Activated naive CD4-positive, alpha-beta T cell treated with anti-CD3 and anti-CD28 coated beads for 36 hours (primary cell): ENCODE measurements at regions of chr13 and their contacts with region 1.

Region 1: GRCh38 chr13:46126552-46127357 is 21.9 kb upstream of the CPB2 start:
- DNase-seq: peak; percentile 91
- H3K4me3 Mint-ChIP-seq: no peak overlapping the region
- H3K27ac Mint-ChIP-seq: peak overlapping the region; percentile 76
- H3K4me1 Mint-ChIP-seq: peaks cover 38% of the 10 kb centered on the region
- H3K27me3 Mint-ChIP-seq: no peaks in the 10 kb centered on the region

Region 2: GRCh38 chr13:45623515-45624090 is 503.2 kb before region 1 on chr13:
- CTCF ChIA-PET with region 1: interaction called, 5 read pairs
- intact Hi-C with region 1: loop called (anchors 1 kb)
- DNase-seq: no peak
- H3K4me3 Mint-ChIP-seq: no peak overlapping the region
- H3K27ac Mint-ChIP-seq: no peak overlapping the region
- H3K4me1 Mint-ChIP-seq: no peaks in the 10 kb centered on the region
- H3K27me3 Mint-ChIP-seq: peaks cover 32% of the 10 kb centered on the region

Region 3: GRCh38 chr13:46052319-46053161 is 74.2 kb before region 1 on chr13 and contains the start of gene ZC3H13:
- CTCF ChIA-PET with region 1: interaction called, 7 read pairs
- intact Hi-C with region 1: loop called (anchors 1 kb)
- DNase-seq: peak; percentile 97
- H3K4me3 Mint-ChIP-seq: peak within 1 kb of the TSS; percentile 81
- H3K27ac Mint-ChIP-seq: peak within 1 kb of the TSS; percentile 94
- H3K4me1 Mint-ChIP-seq: peaks cover 29% of the 10 kb centered on the region
- H3K27me3 Mint-ChIP-seq: peaks cover 4% of the 10 kb centered on the region
- total RNA-seq, gene ZC3H13: 38.2 to 42.2 TPM

Region 4: GRCh38 chr13:46149272-46150133 is 22.7 kb after region 1 on chr13:
- CTCF ChIA-PET with region 1: interaction called, 11 read pairs
- intact Hi-C with region 1: no loop called
- DNase-seq: peak; percentile 81
- H3K4me3 Mint-ChIP-seq: no peak overlapping the region
- H3K27ac Mint-ChIP-seq: peak overlapping the region; percentile 89
- H3K4me1 Mint-ChIP-seq: peaks cover 51% of the 10 kb centered on the region
- H3K27me3 Mint-ChIP-seq: no peaks in the 10 kb centered on the region

Region 5: GRCh38 chr13:46288570-46289259 is 162.0 kb after region 1 on chr13:
- CTCF ChIA-PET with region 1: interaction called, 5 read pairs
- intact Hi-C with region 1: loop called (anchors 2 kb)
- DNase-seq: no peak
- H3K4me3 Mint-ChIP-seq: no peak overlapping the region
- H3K27ac Mint-ChIP-seq: no peak overlapping the region
- H3K4me1 Mint-ChIP-seq: peaks cover 17% of the 10 kb centered on the region
- H3K27me3 Mint-ChIP-seq: no peaks in the 10 kb centered on the region